Activated B cell treated with CpG ODN at 0.5 μM for 24 hours (primary cell): ENCODE measurements at regions of chr21 and their contacts with region 1.

Region 1: DNA sequence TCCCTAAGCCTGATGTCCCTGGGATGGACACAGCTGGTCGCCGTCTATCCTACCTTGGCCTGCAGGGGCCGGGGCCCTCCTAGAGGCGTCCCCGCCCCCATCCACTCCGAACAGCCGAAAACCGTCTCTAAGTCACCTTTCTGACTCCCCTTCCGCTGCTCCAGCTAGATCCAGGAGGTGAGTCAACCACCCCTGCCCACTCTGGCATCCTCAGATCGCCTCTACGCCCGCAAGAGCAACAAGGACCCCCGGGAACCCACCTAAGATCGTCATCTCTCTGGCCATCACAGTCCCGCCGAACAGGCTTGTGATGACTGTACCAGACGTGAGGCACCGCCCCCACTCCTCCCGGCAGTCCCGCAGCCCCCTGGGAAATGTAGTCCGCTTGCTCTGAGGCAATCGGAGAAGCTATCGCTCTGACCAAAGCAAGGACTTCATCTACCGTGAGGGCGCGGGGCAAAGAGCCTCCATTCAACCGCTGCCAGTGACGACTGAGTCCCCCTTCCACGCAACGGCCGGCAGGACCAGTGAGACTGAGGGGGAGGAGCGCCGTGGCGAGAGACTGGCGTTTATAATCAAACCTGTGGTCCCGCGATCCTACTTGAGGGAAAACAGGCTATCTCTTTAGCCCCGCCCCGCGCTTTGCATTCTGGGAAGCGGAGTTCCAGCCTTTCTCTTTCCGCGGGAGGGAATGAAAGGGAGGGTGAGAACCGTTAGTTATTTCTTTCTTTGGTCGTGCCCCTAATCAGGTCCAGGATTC is at the start of gene HSPA13:
- DNase-seq: peak; percentile 93
- ATAC-seq: peak; percentile 94
- H3K4me3 Mint-ChIP-seq: peak within 1 kb of the TSS; percentile 98
- H3K27ac Mint-ChIP-seq: peak within 1 kb of the TSS; percentile 97
- H3K4me1 Mint-ChIP-seq: peaks cover 37% of the 10 kb centered on the region
- H3K27me3 Mint-ChIP-seq: no peaks in the 10 kb centered on the region
- CTCF ChIP-seq: no peak
- total RNA-seq, gene HSPA13: 17.0 and 17.8 TPM in 2 replicates

Region 2: DNA sequence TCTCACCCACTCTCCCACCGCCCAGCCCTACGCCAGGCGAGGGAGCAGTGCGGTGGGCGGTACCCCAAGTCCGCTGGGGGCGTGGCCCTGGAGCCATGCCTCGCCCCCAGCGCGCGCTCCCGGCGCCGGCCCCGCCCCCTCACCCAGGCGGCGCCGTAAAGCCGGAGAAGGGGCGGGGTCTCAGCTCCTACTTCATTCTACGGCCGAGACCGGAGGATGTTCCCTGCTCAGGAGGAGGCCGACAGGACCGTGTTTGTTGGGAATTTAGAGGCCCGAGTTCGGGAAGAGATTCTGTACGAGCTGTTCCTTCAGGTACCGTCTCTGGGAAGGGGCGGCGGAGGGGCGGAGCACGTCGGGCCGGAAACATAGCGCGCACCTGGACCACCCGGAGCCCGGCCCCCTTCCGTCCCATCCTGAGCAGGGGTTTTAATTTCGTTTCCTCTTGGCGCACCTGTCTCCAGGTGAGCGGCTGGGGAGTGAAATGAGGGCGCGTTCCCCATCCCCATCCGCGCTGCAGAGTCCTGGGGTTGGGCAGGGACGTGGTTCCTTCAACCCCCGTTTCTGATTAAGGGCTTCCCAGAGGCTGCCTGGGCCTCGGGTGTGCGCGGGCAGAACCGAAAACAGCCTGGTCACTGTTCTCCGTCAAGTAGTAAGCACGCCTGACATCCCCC is 166.9 kb before region 1 on chr21 and contains the start of gene RBM11:
- CTCF ChIA-PET with region 1: no interaction called
- POLR2A ChIA-PET with region 1: interaction called, 4 read pairs
- intact Hi-C with region 1: loop called (anchors 1 kb)
- DNase-seq: peak; percentile 74
- ATAC-seq: peak; percentile 97
- H3K4me3 Mint-ChIP-seq: peak within 1 kb of the TSS; percentile 88
- H3K27ac Mint-ChIP-seq: no peak within 1 kb of the TSS
- H3K4me1 Mint-ChIP-seq: peaks cover 7% of the 10 kb centered on the region
- H3K27me3 Mint-ChIP-seq: peaks cover 11% of the 10 kb centered on the region
- CTCF ChIP-seq: no peak
- total RNA-seq, gene RBM11: 1.6 TPM in 2 replicates

Region 3: GRCh38 chr21:14533504-14534428 is 150.8 kb after region 1 on chr21:
- CTCF ChIA-PET with region 1: no interaction called
- POLR2A ChIA-PET with region 1: no interaction called
- intact Hi-C with region 1: loop called (anchors 1 kb)
- DNase-seq: no peak
- ATAC-seq: peak; percentile 85
- H3K4me3 Mint-ChIP-seq: peak overlapping the region; percentile 71
- H3K27ac Mint-ChIP-seq: peak overlapping the region; percentile 98
- H3K4me1 Mint-ChIP-seq: peaks cover 79% of the 10 kb centered on the region
- H3K27me3 Mint-ChIP-seq: no peaks in the 10 kb centered on the region
- CTCF ChIP-seq: no peak

Region 4: GRCh38 chr21:14686466-14687267 is 303.7 kb after region 1 on chr21:
- CTCF ChIA-PET with region 1: no interaction called
- POLR2A ChIA-PET with region 1: no interaction called
- intact Hi-C with region 1: loop called (anchors 2 kb)
- DNase-seq: no peak
- ATAC-seq: peak; percentile 35
- H3K4me3 Mint-ChIP-seq: peak overlapping the region; percentile 30
- H3K27ac Mint-ChIP-seq: peak overlapping the region; percentile 82
- H3K4me1 Mint-ChIP-seq: peaks cover 73% of the 10 kb centered on the region
- H3K27me3 Mint-ChIP-seq: no peaks in the 10 kb centered on the region
- CTCF ChIP-seq: no peak

Region 5: DNA sequence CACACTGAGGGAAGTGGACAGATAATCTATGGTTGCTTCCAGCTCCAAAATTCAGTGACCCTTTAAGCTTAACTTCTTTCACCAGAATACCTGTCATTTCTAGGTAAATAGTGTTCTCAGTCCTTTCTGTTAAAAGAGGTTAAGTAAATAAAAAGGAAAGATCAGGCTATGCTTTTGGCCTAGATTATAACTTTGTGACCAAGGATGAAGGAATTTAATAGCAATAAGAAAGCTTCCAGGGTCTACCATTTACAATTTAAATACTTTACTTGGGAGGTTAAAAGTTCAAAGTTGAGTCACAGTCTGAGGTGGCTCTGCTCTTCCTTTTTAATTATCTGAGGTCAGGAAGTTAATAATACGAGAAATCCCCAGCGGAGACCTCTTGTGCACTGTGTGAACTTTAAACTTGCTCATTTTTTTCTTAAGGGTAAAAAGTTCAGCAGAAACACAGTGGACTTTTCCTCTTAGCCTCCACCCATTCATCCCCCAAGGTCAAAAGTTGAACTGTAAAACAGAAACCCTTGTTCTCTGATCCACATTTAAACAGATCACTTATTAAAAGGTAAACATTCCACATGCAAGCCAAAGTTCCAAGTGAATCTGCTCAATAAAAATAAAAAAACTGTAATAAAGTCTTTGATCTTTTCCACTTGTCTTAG is 494.7 kb after region 1 on chr21:
- CTCF ChIA-PET with region 1: no interaction called
- POLR2A ChIA-PET with region 1: no interaction called
- intact Hi-C with region 1: loop called (anchors 5 kb)
- DNase-seq: no peak
- ATAC-seq: peak; percentile 80
- H3K4me3 Mint-ChIP-seq: no peak overlapping the region
- H3K27ac Mint-ChIP-seq: no peak overlapping the region
- H3K4me1 Mint-ChIP-seq: peaks cover 69% of the 10 kb centered on the region
- H3K27me3 Mint-ChIP-seq: no peaks in the 10 kb centered on the region
- CTCF ChIP-seq: no peak

Region 6: GRCh38 chr21:15514073-15514946 is 1131.3 kb after region 1 on chr21:
- CTCF ChIA-PET with region 1: no interaction called
- POLR2A ChIA-PET with region 1: no interaction called
- intact Hi-C with region 1: loop called (anchors 1 kb)
- DNase-seq: peak; percentile 15
- ATAC-seq: peak; percentile 97
- H3K4me3 Mint-ChIP-seq: peak overlapping the region; percentile 3
- H3K27ac Mint-ChIP-seq: peak overlapping the region; percentile 69
- H3K4me1 Mint-ChIP-seq: peaks cover 18% of the 10 kb centered on the region
- H3K27me3 Mint-ChIP-seq: no peaks in the 10 kb centered on the region
- CTCF ChIP-seq: no peak